AG04449 (cell line): ENCODE measurements at regions of chr11 and their contacts with region 1.

Region 1: GRCh38 chr11:92941676-92942571 is 27.5 kb upstream of the MTNR1B start:
- DNase-seq: no peak
- H3K4me3 ChIP-seq: no peak overlapping the region
- CTCF ChIP-seq: peak; percentile 54

Region 2: DNA sequence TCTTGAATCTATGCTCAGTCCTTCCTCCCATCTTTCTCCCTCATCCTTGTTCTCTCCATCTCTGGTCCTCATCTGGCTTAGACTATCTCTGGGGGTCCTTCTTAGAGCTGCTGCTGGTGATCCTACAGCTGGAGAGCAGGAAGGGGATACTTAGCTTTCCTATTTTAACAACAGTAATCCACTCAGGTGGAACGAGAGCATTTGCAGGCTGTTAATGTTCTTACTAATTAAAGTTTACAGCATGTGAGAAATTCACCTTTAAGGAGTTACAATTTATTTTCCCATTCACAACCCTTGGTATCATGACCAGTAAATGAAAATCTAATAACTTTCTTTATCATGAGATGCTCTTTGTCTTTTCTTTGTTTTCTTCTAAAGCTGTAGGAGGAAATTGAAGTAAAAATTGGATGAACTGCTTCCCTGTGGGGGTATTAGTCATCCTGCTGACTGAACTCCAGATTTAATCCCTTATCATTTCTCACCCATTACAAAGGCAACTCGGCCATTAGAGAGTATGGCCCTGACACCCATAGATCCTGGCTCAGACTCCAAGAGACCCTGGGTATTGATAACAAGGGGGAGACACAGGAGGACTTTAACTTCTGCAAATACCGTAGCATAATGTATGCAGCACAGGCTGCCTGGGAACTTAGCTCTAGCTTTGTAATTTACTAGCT is 10.0 kb before region 1 on chr11:
- CTCF ChIA-PET with region 1: interaction called, 14 read pairs
- POLR2A ChIA-PET with region 1: no interaction called
- DNase-seq: no peak
- H3K4me3 ChIP-seq: no peak overlapping the region
- CTCF ChIP-seq: no peak

Region 3: GRCh38 chr11:92964471-92964870 is 22.5 kb after region 1 on chr11:
- CTCF ChIA-PET with region 1: interaction called, 18 read pairs
- POLR2A ChIA-PET with region 1: no interaction called
- DNase-seq: no peak
- H3K4me3 ChIP-seq: no peak overlapping the region
- CTCF ChIP-seq: no peak

Region 4: GRCh38 chr11:93143800-93144199 is 201.9 kb after region 1 on chr11:
- CTCF ChIA-PET with region 1: interaction called, 12 read pairs
- POLR2A ChIA-PET with region 1: no interaction called
- DNase-seq: no peak
- H3K4me3 ChIP-seq: no peak overlapping the region
- CTCF ChIP-seq: no peak

Region 5: GRCh38 chr11:93197380-93198214 is 255.7 kb after region 1 on chr11 and contains the start of gene SLC36A4:
- CTCF ChIA-PET with region 1: interaction called, 16 read pairs
- POLR2A ChIA-PET with region 1: no interaction called
- DNase-seq: peak; percentile 83
- H3K4me3 ChIP-seq: peak within 1 kb of the TSS; percentile 78
- CTCF ChIP-seq: no peak

Region 6: GRCh38 chr11:93234602-93235207 is 292.8 kb after region 1 on chr11:
- CTCF ChIA-PET with region 1: interaction called, 21 read pairs
- POLR2A ChIA-PET with region 1: no interaction called
- DNase-seq: peak; percentile 44
- H3K4me3 ChIP-seq: no peak overlapping the region
- CTCF ChIP-seq: peak; percentile 91